ENCODE measurements at regions of chr16 and their contacts with region 1.

Region 1: GRCh38 chr16:2874912-2875362 is 8.1 kb upstream of the FLYWCH2 start:
- DNase-seq: peak; percentile 74 to 83 (median 76)
- H3K4me3 ChIP-seq: no peak overlapping the region
- H3K4me3 Mint-ChIP-seq: no peak overlapping the region
- H3K27ac ChIP-seq: no peak overlapping the region
- H3K27ac Mint-ChIP-seq: peak overlapping the region in 1 of 7 donors; percentile 31
- H3K4me1 ChIP-seq: peaks cover 8 to 10% of the 10 kb centered on the region in 2 donors
- H3K4me1 Mint-ChIP-seq: peaks cover 11% of the 10 kb centered on the region
- H3K27me3 ChIP-seq: no peaks in the 10 kb centered on the region
- H3K27me3 Mint-ChIP-seq: peaks cover 11 to 12% (median 11%) of the 10 kb centered on the region in 3 donors
- CTCF ChIP-seq: peak; percentile 92

Region 2: DNA sequence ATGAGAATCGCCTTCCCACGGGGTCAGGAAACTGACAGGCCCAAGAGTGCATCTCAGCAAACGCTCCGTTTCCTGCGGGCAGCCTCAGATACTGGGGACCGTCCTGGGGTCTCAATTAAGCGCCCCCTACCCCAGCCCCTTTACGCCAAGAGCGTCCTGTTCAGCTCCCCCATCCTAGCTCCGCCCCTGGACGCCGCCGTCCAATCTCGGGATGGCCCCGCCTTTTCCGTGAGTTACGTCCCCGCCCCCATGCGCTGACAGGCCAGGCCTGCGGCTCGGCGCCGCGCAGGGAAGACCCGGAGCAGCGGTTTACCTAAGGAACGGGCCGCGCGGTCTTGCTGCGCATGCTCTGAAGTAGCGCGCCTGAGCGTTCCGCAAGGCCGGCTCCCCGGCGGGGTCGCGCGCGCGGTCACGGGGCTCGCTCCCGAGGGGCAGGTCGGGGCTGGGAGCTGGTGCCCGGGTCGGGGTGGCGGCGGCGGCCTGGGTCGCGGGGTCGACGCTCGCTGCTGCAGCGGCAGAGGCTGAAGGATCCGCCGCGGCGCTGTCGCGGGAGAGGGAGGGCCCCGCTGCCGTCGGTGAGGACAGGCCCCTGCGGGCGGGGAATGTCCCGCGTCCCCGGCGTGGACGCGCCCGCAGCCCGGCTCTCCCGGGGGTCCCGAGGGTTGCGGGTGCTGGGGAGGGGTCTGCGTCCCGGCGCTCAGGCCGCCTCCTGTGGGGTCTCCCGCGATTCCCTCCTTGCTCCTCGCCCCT is 36.8 kb after region 1 on chr16 and contains the start of gene FLYWCH1:
- intact Hi-C with region 1: loop called in 1 of 2 experiments (anchors 5 kb)
- DNase-seq: peak; percentile 96 to 97 (median 96)
- H3K4me3 ChIP-seq: peak within 1 kb of the TSS; percentile 68 to 84 (median 77)
- H3K4me3 Mint-ChIP-seq: peak within 1 kb of the TSS; percentile 92 to 93
- H3K27ac ChIP-seq: peak within 1 kb of the TSS; percentile 4 to 61
- H3K27ac Mint-ChIP-seq: peak within 1 kb of the TSS; percentile 78 to 93 (median 82)
- H3K4me1 ChIP-seq: peaks cover 27 to 40% of the 10 kb centered on the region in 2 donors
- H3K4me1 Mint-ChIP-seq: peaks cover 42% of the 10 kb centered on the region
- H3K27me3 ChIP-seq: no peaks in the 10 kb centered on the region
- H3K27me3 Mint-ChIP-seq: peaks cover 1 to 4% (median 4%) of the 10 kb centered on the region in 3 donors
- CTCF ChIP-seq: no peak
- polyA plus RNA-seq, gene FLYWCH1: 5.0 to 42.7 (median 7.1) TPM